Heart left ventricle (tissue), 16 donors: ENCODE measurements at regions of chr6 and their contacts with region 1.

Region 1: DNA sequence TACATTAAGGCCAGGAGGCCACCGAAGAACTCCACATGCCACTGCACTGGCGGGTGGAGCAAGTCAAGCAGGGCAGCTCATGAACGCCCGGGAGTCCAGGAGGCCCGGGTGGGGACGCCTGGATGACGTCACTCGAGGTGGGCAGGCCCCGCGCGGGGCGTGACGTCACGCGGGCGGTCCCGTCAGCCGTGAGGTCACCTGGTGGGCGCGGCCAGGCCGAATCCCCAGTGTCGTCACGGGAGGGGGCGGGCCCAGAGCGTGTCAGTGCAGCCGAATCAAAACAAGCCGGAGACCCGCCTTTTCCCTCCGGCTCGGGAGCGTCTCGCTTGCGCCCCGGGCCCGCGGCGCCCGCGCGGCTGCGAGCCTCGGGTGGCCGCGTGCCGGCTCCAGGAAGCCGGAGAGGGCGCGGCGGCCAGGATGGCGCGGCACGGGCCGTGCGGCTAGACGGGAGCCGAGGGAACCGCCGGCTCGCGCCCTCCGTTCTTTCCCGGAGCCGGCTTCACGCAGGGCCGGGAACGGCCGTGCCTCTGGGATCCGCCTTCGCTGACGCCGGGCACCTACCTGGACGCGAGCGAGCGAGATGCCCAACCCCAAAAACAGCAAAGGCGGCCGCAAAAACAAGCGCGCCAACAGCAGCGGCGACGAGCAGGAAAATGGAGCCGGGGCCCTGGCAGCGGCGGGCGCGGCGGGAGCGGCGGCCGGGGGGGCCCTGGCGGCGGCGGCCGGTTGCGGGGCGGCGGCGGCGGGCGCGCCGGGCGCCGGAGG is at the start of gene HECA:
- DNase-seq: peak; percentile 98 to 100 (median 99)
- ATAC-seq: peak; percentile 93 to 96 (median 94)
- H3K4me3 ChIP-seq: peak within 1 kb of the TSS; percentile 58 to 98 (median 82)
- H3K27ac ChIP-seq: peak within 1 kb of the TSS; percentile 88 to 99 (median 96)
- H3K4me1 ChIP-seq: peaks cover 5 to 76% (median 37%) of the 10 kb centered on the region in 12 donors
- H3K27me3 ChIP-seq: no peaks in the 10 kb centered on the region
- CTCF ChIP-seq: no peak
- POLR2A ChIP-seq: peak; percentile 86 to 96
- total RNA-seq, gene HECA: 38.2 to 67.0 (median 48.3) TPM

Region 2: GRCh38 chr6:138987640-138988468 is 147.1 kb before region 1 on chr6 and contains the start of gene REPS1:
- intact Hi-C with region 1: loop called in 1 of 10 experiments (anchors 5 kb)
- DNase-seq: peak; percentile 92 to 95 (median 94)
- ATAC-seq: peak; percentile 95 to 98 (median 98)
- H3K4me3 ChIP-seq: peak within 1 kb of the TSS; percentile 80 to 99 (median 90)
- H3K27ac ChIP-seq: peak within 1 kb of the TSS; percentile 80 to 96 (median 92)
- H3K4me1 ChIP-seq: peaks cover 0 to 42% (median 23%) of the 10 kb centered on the region in 12 donors
- H3K27me3 ChIP-seq: no peaks in the 10 kb centered on the region
- CTCF ChIP-seq: peak; percentile 98 to 100 (median 99)
- POLR2A ChIP-seq: peak in 1 of 2 donors; percentile 62
- total RNA-seq, gene REPS1: 35.2 to 48.2 (median 38.3) TPM

Region 3: DNA sequence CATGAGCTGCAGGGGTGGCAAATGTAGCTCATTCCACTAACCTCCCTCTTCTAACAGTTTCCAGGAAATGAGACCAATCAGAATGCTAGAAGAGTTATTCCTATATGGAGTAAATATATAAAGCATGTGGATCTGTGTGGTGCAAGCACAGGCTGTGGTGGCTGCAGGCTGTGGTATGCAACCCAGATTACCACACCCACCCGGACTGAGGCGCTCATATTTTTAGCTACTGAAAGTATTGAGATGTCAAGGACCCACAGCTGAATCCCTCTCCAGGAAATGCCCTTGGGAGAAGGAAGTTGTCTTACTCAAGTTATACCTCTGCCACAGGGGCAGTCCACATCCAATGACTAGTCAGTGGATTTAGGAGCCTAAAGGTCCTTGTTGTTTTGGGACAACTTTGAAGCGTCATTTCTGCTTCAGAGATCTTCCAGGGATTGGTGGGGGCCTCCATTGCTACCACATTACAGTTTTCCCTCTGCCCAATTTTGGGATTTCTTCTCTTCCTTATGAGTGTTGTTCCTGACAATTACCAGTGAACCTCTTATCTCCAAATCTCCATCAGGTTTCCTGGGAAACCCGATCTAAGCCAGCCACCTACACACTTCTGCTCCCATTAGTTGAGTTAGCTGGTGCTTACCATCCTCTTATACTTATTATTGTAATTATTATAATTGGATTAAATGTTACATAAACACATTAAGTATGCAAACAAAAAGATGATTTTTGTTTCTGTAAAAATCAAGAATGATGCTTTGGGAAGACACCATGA is 134.9 kb before region 1 on chr6:
- intact Hi-C with region 1: no loop called
- DNase-seq: no peak
- ATAC-seq: peak in 1 of 4 donors; percentile 20
- H3K4me3 ChIP-seq: no peak overlapping the region
- H3K27ac ChIP-seq: no peak overlapping the region
- H3K4me1 ChIP-seq: peaks cover 0 to 4% (median 0%) of the 10 kb centered on the region in 12 donors
- H3K27me3 ChIP-seq: no peaks in the 10 kb centered on the region
- CTCF ChIP-seq: no peak
- POLR2A ChIP-seq: no peak

Region 4: GRCh38 chr6:139037490-139037889 is 97.5 kb before region 1 on chr6:
- intact Hi-C with region 1: loop called in 1 of 10 experiments (anchors 5 kb)
- DNase-seq: peak in 1 of 5 donors; percentile 23
- ATAC-seq: peak; percentile 66 to 81 (median 79)
- H3K4me3 ChIP-seq: no peak overlapping the region
- H3K27ac ChIP-seq: peak overlapping the region in 3 of 12 donors; percentile 26 to 52 (median 28)
- H3K4me1 ChIP-seq: peaks cover 0 to 6% (median 0%) of the 10 kb centered on the region in 12 donors
- H3K27me3 ChIP-seq: no peaks in the 10 kb centered on the region
- CTCF ChIP-seq: no peak
- POLR2A ChIP-seq: no peak